Right lobe of liver (tissue), 6 donors: ENCODE measurements at regions of chr9 and their contacts with region 1.

Region 1: DNA sequence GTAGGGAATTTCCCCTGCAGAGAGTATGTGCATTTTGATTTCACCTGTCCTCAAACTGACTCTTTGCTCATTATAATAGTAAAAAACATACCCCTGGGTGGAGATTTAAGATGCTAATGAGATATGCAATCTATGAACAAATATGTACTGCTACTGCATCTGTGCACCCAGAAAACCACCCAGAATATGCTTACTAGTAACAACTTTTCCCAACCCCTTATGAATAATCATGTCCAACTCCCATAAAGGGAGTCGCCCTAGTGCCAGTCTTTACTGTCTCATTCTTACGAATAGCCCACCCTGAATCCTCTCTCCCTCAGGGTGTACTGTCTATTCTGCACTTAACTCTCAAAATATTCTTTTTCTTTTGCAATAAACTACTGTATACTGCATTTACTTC is 39.0 kb upstream of the ZFP37 start:
- DNase-seq: no peak
- ATAC-seq: no peak
- H3K4me3 ChIP-seq: no peak overlapping the region
- H3K27ac ChIP-seq: no peak overlapping the region
- H3K4me1 ChIP-seq: no peaks in the 10 kb centered on the region
- H3K27me3 ChIP-seq: no peaks in the 10 kb centered on the region
- CTCF ChIP-seq: no peak
- POLR2A ChIP-seq: no peak

Region 2: DNA sequence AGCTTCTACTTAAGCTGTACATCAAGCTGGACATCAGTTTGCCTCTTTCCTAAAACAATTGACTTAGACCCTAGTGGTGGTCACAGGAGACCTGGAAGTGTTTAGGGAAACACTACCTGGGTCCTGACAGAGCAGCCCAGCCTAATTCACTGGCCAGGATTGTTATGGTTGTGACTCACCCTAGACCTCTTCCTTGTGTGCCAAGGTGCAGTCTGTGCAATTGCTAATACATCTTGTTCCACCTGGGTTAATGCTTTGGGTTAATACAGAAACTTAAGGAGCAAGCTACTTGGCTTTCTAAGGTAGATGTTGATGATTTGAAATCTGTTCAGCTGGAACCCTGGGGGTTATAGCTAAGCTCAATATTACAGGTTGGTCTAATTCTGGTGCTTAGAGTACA is 156.1 kb before region 1 on chr9:
- intact Hi-C with region 1: loop called (anchors 10 kb)
- DNase-seq: no peak
- ATAC-seq: no peak
- H3K4me3 ChIP-seq: no peak overlapping the region
- H3K27ac ChIP-seq: no peak overlapping the region
- H3K4me1 ChIP-seq: no peaks in the 10 kb centered on the region
- H3K27me3 ChIP-seq: no peaks in the 10 kb centered on the region
- CTCF ChIP-seq: no peak
- POLR2A ChIP-seq: no peak

Region 3: GRCh38 chr9:112945620-112946208 is 149.8 kb before region 1 on chr9:
- intact Hi-C with region 1: loop called in 1 of 2 experiments (anchors 10 kb)
- DNase-seq: no peak
- ATAC-seq: no peak
- H3K4me3 ChIP-seq: no peak overlapping the region
- H3K27ac ChIP-seq: no peak overlapping the region
- H3K4me1 ChIP-seq: no peaks in the 10 kb centered on the region
- H3K27me3 ChIP-seq: no peaks in the 10 kb centered on the region
- CTCF ChIP-seq: no peak
- POLR2A ChIP-seq: no peak

Region 4: DNA sequence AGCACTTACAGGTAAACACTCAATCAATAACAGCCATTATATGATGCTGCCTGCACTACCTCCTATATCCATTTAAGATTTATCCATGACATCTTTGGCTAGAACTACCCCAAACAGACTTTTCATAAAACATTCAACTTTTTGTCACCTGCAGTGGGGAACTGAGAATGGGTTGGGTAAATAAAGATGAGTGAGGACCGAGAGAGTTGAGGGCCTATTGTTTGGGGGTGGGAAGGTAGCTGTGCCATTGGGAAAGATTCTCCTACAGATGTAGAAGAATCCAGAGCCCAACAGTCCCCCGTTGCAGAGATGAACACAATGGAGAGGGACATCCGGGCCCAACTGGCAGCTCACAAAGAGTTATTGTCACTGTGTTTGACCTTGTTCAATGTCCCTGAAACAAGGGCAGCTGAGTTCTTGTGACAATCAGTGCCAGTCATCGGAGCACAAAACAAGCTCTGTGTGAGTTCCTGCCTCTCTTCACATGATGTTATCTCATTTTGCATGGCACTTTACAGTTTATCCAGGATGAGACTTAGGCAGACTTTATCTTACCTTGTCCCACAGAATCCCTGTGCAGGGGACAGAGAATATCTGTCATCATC is 43.8 kb after region 1 on chr9:
- intact Hi-C with region 1: no loop called
- DNase-seq: no peak
- ATAC-seq: no peak
- H3K4me3 ChIP-seq: no peak overlapping the region
- H3K27ac ChIP-seq: no peak overlapping the region
- H3K4me1 ChIP-seq: peaks cover 0 to 5% (median 2%) of the 10 kb centered on the region in 4 donors
- H3K27me3 ChIP-seq: no peaks in the 10 kb centered on the region
- CTCF ChIP-seq: no peak
- POLR2A ChIP-seq: no peak